ENCODE measurements at regions of chr3 and their contacts with region 1.

Region 1: GRCh38 chr3:168322941-168323340 is 227.2 kb upstream of the GOLIM4 start:
- DNase-seq: no peak
- ATAC-seq: no peak
- H3K4me3 Mint-ChIP-seq: no peak overlapping the region
- H3K27ac Mint-ChIP-seq: no peak overlapping the region
- H3K4me1 Mint-ChIP-seq: peaks cover 8% of the 10 kb centered on the region
- H3K27me3 Mint-ChIP-seq: no peaks in the 10 kb centered on the region
- CTCF ChIP-seq: no peak

Region 2: DNA sequence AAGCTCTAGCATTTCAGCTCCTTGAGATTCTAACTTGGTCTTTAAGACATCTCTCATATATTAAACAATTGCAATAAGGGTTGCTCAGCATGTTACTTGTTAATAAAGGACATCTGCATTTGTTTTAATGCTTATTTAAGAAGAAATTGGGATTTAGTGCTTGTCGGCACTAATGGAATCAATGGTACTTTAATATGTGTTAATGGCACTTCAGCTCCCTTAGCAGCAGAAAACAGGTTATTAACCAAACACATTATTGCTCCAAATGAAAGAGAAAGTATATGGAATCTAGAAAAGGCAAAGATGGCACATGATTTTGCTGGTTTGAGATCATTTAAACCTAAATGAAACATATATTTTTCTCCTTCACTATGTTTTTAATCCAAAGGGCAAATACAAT is 89.9 kb before region 1 on chr3:
- CTCF ChIA-PET with region 1: no interaction called
- POLR2A ChIA-PET with region 1: no interaction called
- DNase-seq: no peak
- ATAC-seq: no peak
- H3K4me3 Mint-ChIP-seq: no peak overlapping the region
- H3K27ac Mint-ChIP-seq: no peak overlapping the region
- H3K4me1 Mint-ChIP-seq: no peaks in the 10 kb centered on the region; the same call in 1 of the 2 replicates
- H3K27me3 Mint-ChIP-seq: no peaks in the 10 kb centered on the region
- CTCF ChIP-seq: no peak

Region 3: GRCh38 chr3:168248383-168249204 is 74.3 kb before region 1 on chr3:
- CTCF ChIA-PET with region 1: no interaction called
- POLR2A ChIA-PET with region 1: interaction called, 10 read pairs
- DNase-seq: peak; percentile 51
- ATAC-seq: peak; percentile 54
- H3K4me3 Mint-ChIP-seq: peak overlapping the region; percentile 89
- H3K27ac Mint-ChIP-seq: peak overlapping the region; percentile 93
- H3K4me1 Mint-ChIP-seq: peaks cover 35% of the 10 kb centered on the region
- H3K27me3 Mint-ChIP-seq: peaks cover 33% of the 10 kb centered on the region
- CTCF ChIP-seq: no peak

Region 4: DNA sequence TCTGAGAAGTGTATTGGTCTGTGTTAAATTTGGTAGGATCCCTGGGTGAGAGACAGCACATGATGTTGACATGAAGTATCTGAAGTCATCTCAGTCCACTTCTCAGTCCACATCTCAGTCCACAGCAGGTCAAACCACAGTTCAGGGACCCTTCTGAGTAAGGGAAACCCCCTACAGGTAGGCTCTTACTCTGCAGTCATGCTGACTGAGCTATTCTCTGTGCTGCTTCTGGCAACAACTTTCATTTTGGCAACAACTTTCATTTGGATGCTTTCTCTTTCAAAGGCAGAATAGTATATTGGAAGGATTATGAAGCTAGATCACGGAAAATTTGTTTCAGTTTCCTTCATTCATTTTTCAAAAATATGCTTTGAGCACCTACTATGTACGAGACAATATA is 49.0 kb before region 1 on chr3:
- CTCF ChIA-PET with region 1: no interaction called
- POLR2A ChIA-PET with region 1: no interaction called
- DNase-seq: no peak
- ATAC-seq: peak; percentile 31; the same call in 1 of the 2 replicates
- H3K4me3 Mint-ChIP-seq: no peak overlapping the region
- H3K27ac Mint-ChIP-seq: no peak overlapping the region
- H3K4me1 Mint-ChIP-seq: peaks cover 34% of the 10 kb centered on the region
- H3K27me3 Mint-ChIP-seq: no peaks in the 10 kb centered on the region
- CTCF ChIP-seq: no peak

Region 5: GRCh38 chr3:168307893-168308292 is 15.0 kb before region 1 on chr3:
- CTCF ChIA-PET with region 1: no interaction called
- POLR2A ChIA-PET with region 1: no interaction called
- DNase-seq: no peak
- ATAC-seq: no peak
- H3K4me3 Mint-ChIP-seq: no peak overlapping the region
- H3K27ac Mint-ChIP-seq: no peak overlapping the region
- H3K4me1 Mint-ChIP-seq: no peaks in the 10 kb centered on the region
- H3K27me3 Mint-ChIP-seq: no peaks in the 10 kb centered on the region; the same call in 1 of the 2 replicates
- CTCF ChIP-seq: no peak